PC-3 (cell line): ENCODE measurements at regions of chrX and their contacts with region 1.

Region 1: GRCh38 chrX:50100188-50100587 is 100.6 kb downstream of the AKAP4 start:
- DNase-seq: peak; percentile 45
- ATAC-seq: peak; percentile 51
- H3K4me3 ChIP-seq: no peak overlapping the region
- H3K27ac ChIP-seq: no peak overlapping the region
- H3K4me1 ChIP-seq: no peaks in the 10 kb centered on the region
- H3K27me3 ChIP-seq: no peaks in the 10 kb centered on the region
- CTCF ChIP-seq: peak; percentile 62

Region 2: DNA sequence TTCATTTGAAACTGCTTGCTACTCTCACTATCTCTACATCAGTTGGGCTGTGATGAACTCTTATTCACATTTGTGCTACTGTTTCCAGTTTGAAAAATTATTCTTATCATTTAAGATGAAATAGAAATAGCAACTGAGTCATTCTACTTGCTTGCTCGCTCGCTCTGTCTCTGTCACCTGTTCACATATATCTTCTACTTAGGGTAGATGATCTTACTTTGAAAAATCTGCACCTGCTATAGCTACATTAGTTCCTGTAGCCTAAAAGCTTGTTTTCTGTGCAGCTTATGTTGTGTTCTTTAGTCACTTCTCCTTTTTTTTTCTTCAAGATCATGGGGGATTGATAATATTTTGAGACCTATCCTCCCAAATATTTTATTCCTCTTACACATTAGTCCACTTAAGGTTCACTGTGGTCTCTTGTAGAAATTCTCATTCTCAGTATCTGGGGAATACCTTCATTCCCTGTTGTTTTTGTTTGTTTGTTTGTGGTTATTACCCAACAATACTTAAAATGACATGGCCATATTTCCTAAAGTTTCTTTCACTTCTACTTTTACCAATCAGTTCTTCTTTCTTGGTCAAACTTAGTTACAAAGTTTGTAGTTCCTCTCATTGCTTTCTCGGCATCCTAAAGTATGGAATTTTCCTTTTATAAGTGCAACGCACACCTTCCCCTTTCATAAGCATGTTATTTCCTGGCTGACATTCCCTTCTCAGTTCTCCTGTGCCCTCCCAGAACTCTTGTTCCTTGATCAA is 141.3 kb before region 1 on chrX:
- CTCF ChIA-PET with region 1: no interaction called
- POLR2A ChIA-PET with region 1: no interaction called
- intact Hi-C with region 1: no loop called
- DNase-seq: no peak
- ATAC-seq: no peak
- H3K4me3 ChIP-seq: no peak overlapping the region
- H3K27ac ChIP-seq: no peak overlapping the region
- H3K4me1 ChIP-seq: no peaks in the 10 kb centered on the region; the same call in 1 of the 2 replicates
- H3K27me3 ChIP-seq: no peaks in the 10 kb centered on the region
- CTCF ChIP-seq: no peak

Region 3: DNA sequence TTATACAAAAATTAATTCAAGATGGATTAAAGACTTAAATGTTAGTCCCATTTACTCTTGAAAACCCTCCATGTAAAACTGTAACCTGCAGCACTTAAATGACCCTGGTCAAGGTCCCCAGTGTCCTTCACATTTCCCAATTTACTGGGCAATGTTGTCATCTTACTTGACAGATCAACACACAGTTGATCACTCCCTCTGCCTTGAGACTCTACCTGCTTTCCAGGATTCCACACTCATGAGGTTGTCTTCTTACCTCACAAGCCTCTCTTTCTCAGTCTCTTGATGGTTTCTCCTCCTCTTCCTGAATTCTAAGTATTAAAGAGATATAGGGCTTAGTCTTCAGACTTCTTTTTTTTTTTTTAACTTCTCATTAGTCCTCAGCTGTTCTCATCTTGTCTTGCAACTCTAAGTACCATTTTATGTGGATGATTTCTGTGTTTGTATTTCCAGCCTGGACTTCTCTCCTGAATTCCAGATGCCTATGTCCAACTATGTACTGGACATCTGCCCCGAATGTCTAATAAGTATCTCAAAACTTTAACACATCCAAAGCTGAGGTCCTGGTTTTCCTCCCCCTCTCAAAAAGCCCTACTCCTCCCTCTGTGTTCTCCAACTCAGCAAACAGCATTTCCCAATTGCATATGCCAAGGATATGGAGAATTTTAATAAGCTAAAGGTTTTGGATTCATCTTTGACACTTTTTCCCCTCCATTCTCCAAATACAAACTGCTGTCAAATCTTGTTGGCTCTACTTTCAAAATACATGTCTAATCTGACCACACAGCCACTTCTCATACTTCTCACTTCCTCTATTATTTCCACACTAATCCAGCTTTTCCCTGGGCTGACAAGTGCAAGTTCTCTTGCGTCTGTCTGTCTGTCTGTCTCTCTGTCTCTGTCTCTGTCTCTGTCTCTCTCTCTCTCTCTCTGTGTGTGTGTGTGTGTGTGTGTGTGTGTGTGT is 98.2 kb before region 1 on chrX:
- CTCF ChIA-PET with region 1: no interaction called
- POLR2A ChIA-PET with region 1: no interaction called
- intact Hi-C with region 1: no loop called
- DNase-seq: no peak
- ATAC-seq: no peak
- H3K4me3 ChIP-seq: no peak overlapping the region
- H3K27ac ChIP-seq: no peak overlapping the region
- H3K4me1 ChIP-seq: peaks cover 11% of the 10 kb centered on the region
- H3K27me3 ChIP-seq: no peaks in the 10 kb centered on the region
- CTCF ChIP-seq: no peak

Region 4: GRCh38 chrX:50579955-50580354 is 479.8 kb after region 1 on chrX:
- CTCF ChIA-PET with region 1: interaction called, 3 read pairs
- POLR2A ChIA-PET with region 1: no interaction called
- intact Hi-C with region 1: loop called (anchors 5 kb)
- DNase-seq: peak; percentile 74
- ATAC-seq: peak; percentile 75
- H3K4me3 ChIP-seq: no peak overlapping the region
- H3K27ac ChIP-seq: no peak overlapping the region
- H3K4me1 ChIP-seq: no peaks in the 10 kb centered on the region
- H3K27me3 ChIP-seq: no peaks in the 10 kb centered on the region
- CTCF ChIP-seq: peak; percentile 72